ENCODE measurements at regions of chr15 and their contacts with region 1.

Region 1: DNA sequence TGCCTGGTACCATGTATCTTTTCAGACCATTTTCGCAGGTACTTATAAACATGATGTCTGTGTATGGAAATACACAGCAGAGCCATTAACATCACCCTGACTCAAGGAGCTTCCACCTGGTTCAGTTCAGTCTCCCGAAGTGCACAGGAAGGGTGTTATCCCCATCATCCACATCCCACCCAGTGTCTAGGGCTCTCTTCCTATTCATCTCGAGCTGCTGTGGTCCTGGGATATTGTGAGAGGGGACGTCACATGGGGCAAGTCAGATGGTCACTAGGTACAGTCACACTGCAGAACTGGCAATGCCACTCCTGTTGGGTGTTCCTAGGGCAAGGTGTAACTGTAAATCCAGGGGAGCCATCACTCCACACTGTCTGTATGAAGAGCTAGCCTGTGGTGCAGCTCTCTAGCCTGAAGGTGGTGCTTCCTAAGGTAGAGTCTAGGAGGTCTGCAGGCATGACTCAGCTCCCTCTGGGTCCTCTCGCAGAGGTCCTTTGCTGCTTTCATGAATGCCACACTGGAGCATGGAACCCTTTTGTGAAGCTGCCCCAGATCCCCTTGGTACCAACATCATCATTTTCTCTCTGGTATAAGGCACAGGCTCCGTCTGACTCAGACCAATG is 13.9 kb downstream of the ISLR2 start:
- DNase-seq: no peak
- H3K4me3 ChIP-seq: no peak overlapping the region
- H3K27ac ChIP-seq: no peak overlapping the region
- H3K4me1 ChIP-seq: peaks cover 2 to 20% (median 6%) of the 10 kb centered on the region in 4 experiments; a peak in 5 of 7 replicates
- H3K27me3 ChIP-seq: peaks cover 0 to 3% (median 3%) of the 10 kb centered on the region in 4 experiments; a peak in 1 of 7 replicates
- CTCF ChIP-seq: peak in 2 of 3 experiments; percentile 36 to 57; a peak in 3 of 4 replicates
- EP300 ChIP-seq: no peak
- POLR2A ChIP-seq: no peak
- RAD21 ChIP-seq: peak; percentile 25 to 50; a peak in 3 of 4 replicates

Region 2: DNA sequence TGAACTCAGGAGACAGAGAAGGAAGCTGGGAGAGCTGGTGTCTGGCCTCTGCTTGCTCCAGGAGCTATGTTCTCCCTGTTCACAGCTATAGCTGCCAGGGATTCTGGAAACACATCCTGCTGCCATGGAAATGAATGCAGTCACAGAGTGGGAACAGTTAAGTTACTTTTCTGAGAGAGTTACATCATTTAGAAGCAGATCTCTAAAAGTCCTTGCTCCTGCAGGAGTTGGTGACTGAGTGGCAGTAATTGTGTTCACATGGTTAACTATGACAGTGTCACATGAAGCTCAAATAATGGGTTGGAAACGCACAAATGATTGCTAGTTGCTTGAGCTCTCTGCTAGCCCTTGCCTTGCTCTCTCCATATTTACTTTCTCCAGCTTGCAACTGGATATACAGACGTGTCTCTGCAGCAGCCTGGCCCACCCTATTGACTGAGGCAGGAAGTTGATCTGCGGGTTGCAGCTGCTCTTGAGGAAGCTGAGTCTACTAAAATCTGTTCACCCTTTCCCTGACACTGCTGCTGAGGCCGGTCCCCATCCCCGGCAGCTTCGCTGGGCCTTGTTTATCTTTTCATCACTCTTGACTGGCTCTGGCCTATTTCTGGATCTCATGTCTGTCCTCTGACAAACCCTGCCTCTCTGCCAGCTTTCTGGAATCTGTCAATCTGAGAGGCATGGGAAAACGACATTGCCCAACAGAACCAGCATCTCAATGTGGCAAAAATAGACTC is 12.6 kb after region 1 on chr15:
- CTCF ChIA-PET with region 1: interaction called, 24 read pairs
- POLR2A ChIA-PET with region 1: interaction called, 4 read pairs
- DNase-seq: no peak
- H3K4me3 ChIP-seq: no peak overlapping the region
- H3K27ac ChIP-seq: no peak overlapping the region
- H3K4me1 ChIP-seq: peaks cover 0 to 2% (median 0%) of the 10 kb centered on the region in 4 experiments; a peak in 1 of 7 replicates
- H3K27me3 ChIP-seq: no peaks in the 10 kb centered on the region; a peak in 1 of 7 replicates
- CTCF ChIP-seq: no peak
- EP300 ChIP-seq: no peak
- POLR2A ChIP-seq: no peak
- RAD21 ChIP-seq: no peak

Measured in H1 (cell line).